Uterus (tissue), 4 donors: ENCODE measurements at regions of chr2 and their contacts with region 1.

Region 1: GRCh38 chr2:231530091-231531011 is at the start of gene NMUR1:
- DNase-seq: peak; percentile 31 to 51
- H3K4me3 ChIP-seq: peak within 1 kb of the TSS in 1 of 2 donors; percentile 19
- H3K27ac ChIP-seq: no peak within 1 kb of the TSS
- H3K4me1 ChIP-seq: no peaks in the 10 kb centered on the region
- H3K27me3 ChIP-seq: peaks cover 0 to 3% of the 10 kb centered on the region in 2 donors
- CTCF ChIP-seq: peak; percentile 45 to 80 (median 73)
- POLR2A ChIP-seq: no peak
- total RNA-seq, gene NMUR1: 0.41 to 0.67 TPM in 2 of 4 donors, not detected in the others

Region 2: GRCh38 chr2:230356084-230356483 is 1174.3 kb before region 1 on chr2:
- intact Hi-C with region 1: no loop called
- DNase-seq: no peak
- H3K4me3 ChIP-seq: no peak overlapping the region
- H3K27ac ChIP-seq: no peak overlapping the region
- H3K4me1 ChIP-seq: no peaks in the 10 kb centered on the region
- H3K27me3 ChIP-seq: no peaks in the 10 kb centered on the region
- CTCF ChIP-seq: no peak
- POLR2A ChIP-seq: no peak

Region 3: GRCh38 chr2:231597014-231597611 is 66.8 kb after region 1 on chr2:
- intact Hi-C with region 1: loop called (anchors 10 kb)
- DNase-seq: peak in 1 of 2 donors; percentile 78
- H3K4me3 ChIP-seq: no peak overlapping the region
- H3K27ac ChIP-seq: peak overlapping the region; percentile 41 to 46
- H3K4me1 ChIP-seq: peaks cover 0 to 6% of the 10 kb centered on the region in 2 donors
- H3K27me3 ChIP-seq: no peaks in the 10 kb centered on the region
- CTCF ChIP-seq: no peak
- POLR2A ChIP-seq: no peak

Region 4: GRCh38 chr2:231853105-231853504 is 322.8 kb after region 1 on chr2:
- intact Hi-C with region 1: no loop called
- DNase-seq: no peak
- H3K4me3 ChIP-seq: no peak overlapping the region
- H3K27ac ChIP-seq: no peak overlapping the region
- H3K4me1 ChIP-seq: no peaks in the 10 kb centered on the region
- H3K27me3 ChIP-seq: no peaks in the 10 kb centered on the region
- CTCF ChIP-seq: no peak
- POLR2A ChIP-seq: no peak